Sigmoid colon (tissue), 7 donors: ENCODE measurements at regions of chr9 and their contacts with region 1.

Region 1: DNA sequence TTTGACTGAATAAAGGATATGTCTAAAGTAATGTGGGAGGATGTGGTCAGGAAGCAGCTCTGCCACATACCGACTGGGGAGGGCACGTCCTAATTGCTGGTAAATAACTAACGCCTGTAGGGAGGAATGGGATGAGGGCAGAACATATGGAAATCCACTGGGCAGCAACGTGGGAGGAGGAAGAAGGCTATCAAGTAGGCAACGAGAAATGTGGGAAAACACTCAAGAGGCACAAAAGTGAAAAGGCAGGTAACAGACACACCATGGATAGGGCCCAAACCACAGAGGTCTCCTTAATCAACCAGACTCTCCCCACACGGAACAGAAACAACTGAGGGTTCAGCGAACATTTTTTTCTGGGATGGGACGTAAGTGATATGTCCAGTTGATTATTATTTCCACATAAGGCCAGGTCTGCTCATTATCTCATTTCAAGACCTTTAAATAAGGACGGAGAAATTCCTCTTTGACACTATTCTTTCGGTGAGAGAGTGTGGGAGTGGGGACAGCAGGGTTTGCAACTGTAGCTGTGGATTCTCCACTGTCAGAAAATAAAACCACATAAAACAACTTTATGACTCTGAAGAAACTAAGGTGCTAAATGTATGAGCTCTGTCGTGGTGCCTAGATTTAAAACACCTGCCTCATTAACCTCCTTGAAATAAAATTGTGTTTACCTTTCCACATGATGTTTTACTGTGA is 17.0 kb downstream of the IARS1 start:
- DNase-seq: no peak
- H3K4me3 ChIP-seq: no peak overlapping the region
- H3K27ac ChIP-seq: no peak overlapping the region
- H3K4me1 ChIP-seq: no peaks in the 10 kb centered on the region
- H3K27me3 ChIP-seq: no peaks in the 10 kb centered on the region
- CTCF ChIP-seq: no peak
- EP300 ChIP-seq: no peak
- POLR2A ChIP-seq: no peak

Region 2: GRCh38 chr9:92223758-92224157 is 52.7 kb before region 1 on chr9:
- intact Hi-C with region 1: no loop called
- DNase-seq: no peak
- H3K4me3 ChIP-seq: no peak overlapping the region
- H3K27ac ChIP-seq: no peak overlapping the region
- H3K4me1 ChIP-seq: no peaks in the 10 kb centered on the region
- H3K27me3 ChIP-seq: no peaks in the 10 kb centered on the region
- CTCF ChIP-seq: no peak
- EP300 ChIP-seq: no peak
- POLR2A ChIP-seq: no peak

Region 3: DNA sequence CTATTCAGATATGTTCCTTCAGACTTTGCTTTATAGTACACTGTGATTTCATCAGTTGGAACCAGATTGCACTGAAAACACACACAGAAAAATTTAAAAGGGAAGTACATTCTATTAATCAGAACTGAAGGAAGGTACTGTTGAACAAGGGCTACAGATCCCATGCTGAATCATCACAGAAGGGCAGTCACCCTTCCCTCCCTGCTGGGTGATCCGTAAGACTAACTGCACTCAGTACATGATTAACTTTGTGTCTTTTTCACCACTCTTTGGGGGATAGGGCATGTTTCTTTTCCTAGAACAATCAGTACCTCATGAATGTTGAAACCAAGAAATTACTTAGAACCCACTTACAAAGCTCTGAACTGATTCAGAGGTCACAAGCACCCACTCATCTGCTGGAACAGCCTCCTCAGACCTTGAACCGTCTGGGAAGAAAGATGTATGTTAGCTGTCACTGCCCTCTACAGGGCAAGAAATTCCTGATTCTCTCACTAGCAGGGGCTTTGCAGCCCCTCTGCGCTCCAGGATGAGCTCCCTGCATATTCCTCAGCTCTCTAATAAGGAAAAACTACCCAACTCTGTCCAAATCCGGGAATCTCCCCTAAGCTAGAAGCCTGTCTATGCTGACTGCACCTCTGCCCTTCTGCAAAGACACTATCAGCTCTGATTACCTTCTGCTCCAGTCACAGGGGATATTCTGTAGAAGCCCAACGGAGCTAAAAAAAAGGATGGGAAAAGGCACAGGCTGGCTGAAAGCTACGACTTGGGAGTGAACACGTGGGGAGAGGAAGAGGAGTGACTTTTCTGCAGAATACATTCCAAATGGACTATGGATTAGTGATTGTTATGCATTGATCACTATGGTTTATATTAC is 34.0 kb before region 1 on chr9:
- intact Hi-C with region 1: loop called (anchors 5 kb)
- DNase-seq: no peak
- H3K4me3 ChIP-seq: no peak overlapping the region
- H3K27ac ChIP-seq: no peak overlapping the region
- H3K4me1 ChIP-seq: no peaks in the 10 kb centered on the region
- H3K27me3 ChIP-seq: no peaks in the 10 kb centered on the region
- CTCF ChIP-seq: no peak
- EP300 ChIP-seq: no peak
- POLR2A ChIP-seq: no peak

Region 4: DNA sequence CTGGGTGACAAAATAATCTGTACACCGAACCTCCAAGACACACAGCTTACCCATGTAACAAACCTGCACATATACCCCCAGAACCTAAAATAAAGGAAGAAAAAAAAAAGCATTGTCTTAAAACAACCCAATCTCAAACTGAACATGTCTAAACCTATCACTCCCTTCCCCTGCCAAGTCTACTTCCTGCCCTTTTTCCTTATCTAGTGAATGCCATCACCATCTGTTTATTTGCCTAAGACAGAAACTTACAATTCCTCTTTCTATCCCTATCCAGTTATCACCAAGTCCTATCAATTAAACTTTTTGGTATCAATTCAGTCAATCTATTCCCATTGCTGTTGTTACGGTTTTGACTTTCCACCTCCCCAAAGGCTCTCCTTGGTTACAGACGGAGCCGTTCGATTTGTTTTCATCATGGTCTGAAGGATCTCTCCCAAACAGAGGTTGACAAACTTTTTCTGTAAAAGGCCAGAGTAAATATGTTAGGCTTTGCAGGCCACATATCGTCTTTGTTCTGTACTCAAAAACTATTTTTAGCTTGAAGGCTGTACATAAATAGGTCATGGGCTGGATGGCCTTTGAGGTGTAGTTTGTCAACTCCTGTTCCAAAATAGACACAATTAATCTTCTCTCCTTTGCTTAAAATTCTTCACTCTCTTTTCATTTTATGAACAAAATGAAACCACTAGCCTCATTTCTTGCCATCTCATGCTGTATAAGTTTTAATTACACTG is 36.6 kb after region 1 on chr9:
- intact Hi-C with region 1: no loop called
- DNase-seq: no peak
- H3K4me3 ChIP-seq: no peak overlapping the region
- H3K27ac ChIP-seq: no peak overlapping the region
- H3K4me1 ChIP-seq: peaks cover 0 to 9% (median 2%) of the 10 kb centered on the region in 4 donors
- H3K27me3 ChIP-seq: no peaks in the 10 kb centered on the region
- CTCF ChIP-seq: no peak
- EP300 ChIP-seq: no peak
- POLR2A ChIP-seq: no peak